Activated B cell treated with CpG ODN at 0.5 μM for 24 hours (primary cell): ENCODE measurements at regions of chr3 and their contacts with region 1.

Region 1: DNA sequence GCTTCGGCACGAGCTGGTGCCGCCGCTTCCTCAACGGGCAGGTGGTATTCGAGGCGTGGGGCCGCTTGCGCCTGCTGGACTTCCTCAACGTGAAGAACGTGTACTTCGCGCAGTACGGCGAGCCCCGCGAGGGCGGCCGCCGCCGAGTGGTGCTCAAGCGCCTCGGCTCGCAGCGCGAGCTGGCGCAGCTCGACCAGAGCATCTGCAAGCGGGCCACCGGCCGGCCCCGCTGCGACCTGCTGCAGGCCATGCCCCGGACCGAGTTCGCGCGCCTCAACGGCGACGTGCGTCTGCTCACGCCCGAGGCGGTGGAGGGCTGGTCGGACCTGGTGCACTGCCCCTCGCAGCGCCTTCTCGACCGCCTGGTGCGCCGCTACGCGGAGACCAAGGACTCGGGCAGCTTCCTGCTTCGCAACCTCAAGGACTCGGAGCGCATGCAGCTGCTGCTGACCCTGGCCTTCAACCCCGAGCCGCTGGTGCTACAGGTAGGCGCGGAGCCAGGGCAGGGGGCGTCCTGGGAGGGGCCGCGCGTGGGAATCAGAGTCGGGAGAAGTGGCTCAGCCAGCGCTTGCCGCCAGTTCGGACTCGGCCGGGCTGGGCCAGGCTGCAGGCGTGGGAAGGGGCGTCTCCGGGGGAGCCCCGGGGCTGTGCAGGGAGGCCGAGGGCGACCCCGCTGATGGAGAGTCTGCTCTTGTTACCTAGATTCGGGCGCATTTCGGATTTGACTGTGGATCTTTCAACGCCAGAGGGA is 1.1 kb downstream of the DIPK2A start:
- DNase-seq: peak; percentile 74
- ATAC-seq: peak; percentile 15
- H3K4me3 Mint-ChIP-seq: peak overlapping the region; percentile 99
- H3K27ac Mint-ChIP-seq: peak overlapping the region; percentile 99
- H3K4me1 Mint-ChIP-seq: peaks cover 48% of the 10 kb centered on the region
- H3K27me3 Mint-ChIP-seq: no peaks in the 10 kb centered on the region
- CTCF ChIP-seq: no peak

Region 2: GRCh38 chr3:142595951-142596725 is 1376.5 kb before region 1 on chr3 and contains the start of gene PLS1:
- CTCF ChIA-PET with region 1: no interaction called
- POLR2A ChIA-PET with region 1: no interaction called
- intact Hi-C with region 1: loop called (anchors 5 kb)
- DNase-seq: peak; percentile 89
- ATAC-seq: peak; percentile 84
- H3K4me3 Mint-ChIP-seq: peak within 1 kb of the TSS; percentile 95
- H3K27ac Mint-ChIP-seq: peak within 1 kb of the TSS; percentile 56
- H3K4me1 Mint-ChIP-seq: peaks cover 16% of the 10 kb centered on the region
- H3K27me3 Mint-ChIP-seq: peaks cover 12% of the 10 kb centered on the region
- CTCF ChIP-seq: no peak
- total RNA-seq, gene PLS1: 0.66 and 0.91 TPM in 2 replicates

Region 3: DNA sequence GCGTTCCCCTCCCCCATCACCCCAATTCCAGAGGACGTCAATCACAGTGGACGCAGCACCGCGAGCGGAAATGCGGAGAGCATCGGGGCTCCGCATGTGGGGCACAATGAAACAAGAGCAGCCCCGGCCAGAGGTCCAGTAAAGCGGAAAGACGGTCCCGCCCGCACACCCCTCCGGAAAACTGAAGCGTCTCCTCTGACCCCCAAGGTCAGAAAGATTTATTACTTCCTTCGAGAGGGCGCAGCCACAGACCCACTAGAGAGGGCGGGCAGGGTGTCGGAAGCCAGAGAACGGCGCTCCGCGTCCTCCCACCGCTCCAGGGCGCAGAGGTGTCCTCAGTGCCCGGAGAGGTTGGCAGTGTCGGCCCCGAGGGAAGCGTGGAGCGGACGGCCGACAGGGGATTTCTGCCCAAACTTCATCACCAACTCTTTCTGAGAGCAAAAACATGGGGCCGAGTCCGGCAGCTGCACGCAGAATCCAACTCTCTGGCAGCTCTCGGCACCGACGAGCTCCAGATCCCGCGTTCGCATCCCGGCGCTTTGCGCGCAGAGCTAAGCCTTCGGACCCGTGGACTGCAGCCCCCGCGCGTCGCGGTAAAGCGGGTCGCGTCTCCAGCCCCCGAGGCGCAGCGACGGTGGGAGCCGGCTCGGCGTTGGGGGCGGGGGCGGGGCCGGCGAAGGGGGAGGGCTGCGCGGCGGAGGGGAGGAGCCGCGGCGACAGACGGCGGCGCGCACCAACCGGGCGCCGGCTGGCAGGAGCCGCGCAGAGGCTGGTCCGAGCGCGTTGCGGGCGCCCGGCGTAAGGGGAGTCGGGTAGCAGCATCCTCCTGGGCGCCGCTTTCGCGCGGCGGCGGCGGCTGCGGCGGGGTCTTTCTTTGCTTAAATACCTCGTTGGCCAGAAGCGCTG is 853.4 kb before region 1 on chr3 and contains the start of gene CHST2:
- CTCF ChIA-PET with region 1: no interaction called
- POLR2A ChIA-PET with region 1: interaction called, 6 read pairs
- intact Hi-C with region 1: loop called (anchors 5 kb)
- DNase-seq: peak; percentile 77
- ATAC-seq: peak; percentile 89
- H3K4me3 Mint-ChIP-seq: peak within 1 kb of the TSS; percentile 90
- H3K27ac Mint-ChIP-seq: peak within 1 kb of the TSS; percentile 78
- H3K4me1 Mint-ChIP-seq: peaks cover 32% of the 10 kb centered on the region
- H3K27me3 Mint-ChIP-seq: no peaks in the 10 kb centered on the region
- CTCF ChIP-seq: no peak
- total RNA-seq, gene CHST2: 11.8 and 12.3 TPM in 2 replicates

Region 4: GRCh38 chr3:143627336-143627735 is 345.3 kb before region 1 on chr3:
- CTCF ChIA-PET with region 1: no interaction called
- POLR2A ChIA-PET with region 1: no interaction called
- intact Hi-C with region 1: no loop called
- DNase-seq: no peak
- ATAC-seq: no peak
- H3K4me3 Mint-ChIP-seq: no peak overlapping the region
- H3K27ac Mint-ChIP-seq: no peak overlapping the region
- H3K4me1 Mint-ChIP-seq: no peaks in the 10 kb centered on the region
- H3K27me3 Mint-ChIP-seq: no peaks in the 10 kb centered on the region
- CTCF ChIP-seq: no peak

Region 5: GRCh38 chr3:143847787-143848631 is 124.7 kb before region 1 on chr3 and contains the start of gene SLC9A9:
- CTCF ChIA-PET with region 1: interaction called, 3 read pairs
- POLR2A ChIA-PET with region 1: interaction called, 12 read pairs
- intact Hi-C with region 1: loop called (anchors 1 kb)
- DNase-seq: no peak
- ATAC-seq: peak; percentile 94
- H3K4me3 Mint-ChIP-seq: peak within 1 kb of the TSS; percentile 96
- H3K27ac Mint-ChIP-seq: peak within 1 kb of the TSS; percentile 91
- H3K4me1 Mint-ChIP-seq: peaks cover 50% of the 10 kb centered on the region
- H3K27me3 Mint-ChIP-seq: no peaks in the 10 kb centered on the region
- CTCF ChIP-seq: no peak
- total RNA-seq, gene SLC9A9: 9.0 and 9.4 TPM in 2 replicates

Region 6: DNA sequence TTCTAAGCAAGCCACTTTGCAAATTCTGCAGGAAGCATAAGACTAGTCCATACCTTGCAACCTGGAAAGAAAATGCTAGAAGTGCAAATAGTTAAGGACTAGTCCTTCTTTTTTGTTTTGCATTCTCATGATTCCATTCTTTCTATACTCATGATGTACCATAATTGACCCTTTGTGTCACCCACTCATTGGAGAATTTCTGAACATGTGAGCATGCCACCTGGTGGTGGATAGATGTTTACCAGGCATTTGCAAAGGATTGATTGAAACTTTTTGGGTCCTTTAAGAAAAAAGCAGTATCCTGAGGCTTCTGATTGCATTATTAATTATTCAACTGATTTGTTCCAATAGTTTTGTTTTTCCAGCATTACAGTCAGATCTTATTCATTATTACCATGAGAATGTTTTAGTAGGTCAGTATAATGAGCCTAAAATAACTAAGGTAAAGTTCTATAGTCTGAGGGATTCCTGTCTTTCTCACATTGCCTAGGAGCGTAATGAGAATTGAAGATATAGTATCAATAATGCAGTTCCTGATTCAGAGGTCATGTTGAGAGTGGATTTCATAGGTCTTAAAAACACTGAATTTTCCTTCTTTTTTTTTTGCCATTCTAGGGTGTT is 21.2 kb before region 1 on chr3:
- CTCF ChIA-PET with region 1: interaction called, 13 read pairs
- POLR2A ChIA-PET with region 1: interaction called, 7 read pairs
- intact Hi-C with region 1: loop called (anchors 1 kb)
- DNase-seq: no peak
- ATAC-seq: peak; percentile 62
- H3K4me3 Mint-ChIP-seq: no peak overlapping the region
- H3K27ac Mint-ChIP-seq: no peak overlapping the region
- H3K4me1 Mint-ChIP-seq: peaks cover 2% of the 10 kb centered on the region
- H3K27me3 Mint-ChIP-seq: no peaks in the 10 kb centered on the region
- CTCF ChIP-seq: peak; percentile 64

Region 7: DNA sequence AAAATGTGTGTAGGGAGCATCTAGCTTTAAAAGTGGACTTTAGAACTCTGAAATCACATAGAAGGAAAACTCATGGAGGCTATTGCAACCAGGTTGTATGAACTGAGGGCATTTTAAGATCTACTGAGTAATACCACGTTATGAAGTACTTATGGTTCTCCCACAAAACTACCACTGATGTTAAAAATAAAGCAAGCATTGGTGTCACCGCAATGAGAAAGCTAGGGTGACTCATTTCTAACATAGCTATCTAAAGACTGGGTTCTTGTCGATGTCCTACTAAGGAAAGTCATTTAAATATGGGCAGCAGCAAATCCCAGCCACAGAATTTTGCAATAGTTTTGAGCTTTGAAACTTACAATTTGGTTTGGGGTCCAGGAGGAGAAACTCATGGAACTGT is 583.7 kb after region 1 on chr3:
- CTCF ChIA-PET with region 1: no interaction called
- POLR2A ChIA-PET with region 1: no interaction called
- intact Hi-C with region 1: loop called (anchors 10 kb)
- DNase-seq: no peak
- ATAC-seq: no peak
- H3K4me3 Mint-ChIP-seq: no peak overlapping the region
- H3K27ac Mint-ChIP-seq: no peak overlapping the region
- H3K4me1 Mint-ChIP-seq: no peaks in the 10 kb centered on the region
- H3K27me3 Mint-ChIP-seq: no peaks in the 10 kb centered on the region
- CTCF ChIP-seq: no peak